Prostate gland (tissue), 2 donors: ENCODE measurements at regions of chr2 and their contacts with region 1.

Region 1: GRCh38 chr2:231514103-231514950 is 15.9 kb downstream of the NMUR1 start:
- DNase-seq: peak; percentile 98
- H3K4me3 ChIP-seq: peak overlapping the region; percentile 52 to 62
- H3K27ac ChIP-seq: peak overlapping the region; percentile 79 to 86
- H3K4me1 ChIP-seq: no peaks in the 10 kb centered on the region
- H3K27me3 ChIP-seq: no peaks in the 10 kb centered on the region
- CTCF ChIP-seq: peak in 1 of 4 experiments; percentile 11
- POLR2A ChIP-seq: peak; percentile 77

Region 2: GRCh38 chr2:231463698-231464575 is 50.4 kb before region 1 on chr2 and contains the start of gene NCL:
- intact Hi-C with region 1: loop called (anchors 2 kb)
- DNase-seq: peak; percentile 74
- H3K4me3 ChIP-seq: peak within 1 kb of the TSS; percentile 82 to 94
- H3K27ac ChIP-seq: peak within 1 kb of the TSS; percentile 92 to 97
- H3K4me1 ChIP-seq: peaks cover 15% of the 10 kb centered on the region
- H3K27me3 ChIP-seq: no peaks in the 10 kb centered on the region
- CTCF ChIP-seq: no peak
- POLR2A ChIP-seq: peak; percentile 88
- total RNA-seq, gene NCL: 92.0 to 160 TPM

Region 3: GRCh38 chr2:231557571-231558237 is 43.4 kb after region 1 on chr2:
- intact Hi-C with region 1: loop called (anchors 5 kb)
- DNase-seq: peak; percentile 49
- H3K4me3 ChIP-seq: no peak overlapping the region
- H3K27ac ChIP-seq: peak overlapping the region; percentile 2 to 25
- H3K4me1 ChIP-seq: no peaks in the 10 kb centered on the region
- H3K27me3 ChIP-seq: no peaks in the 10 kb centered on the region
- CTCF ChIP-seq: peak; percentile 53 to 80 (median 70)
- POLR2A ChIP-seq: no peak

Region 4: GRCh38 chr2:231604685-231605606 is 90.6 kb after region 1 on chr2:
- intact Hi-C with region 1: loop called (anchors 5 kb)
- DNase-seq: peak; percentile 98
- H3K4me3 ChIP-seq: peak overlapping the region; percentile 43
- H3K27ac ChIP-seq: peak overlapping the region; percentile 98 to 99
- H3K4me1 ChIP-seq: peaks cover 11% of the 10 kb centered on the region
- H3K27me3 ChIP-seq: no peaks in the 10 kb centered on the region
- CTCF ChIP-seq: peak in 1 of 4 experiments; percentile 13
- POLR2A ChIP-seq: peak; percentile 56